Common myeloid progenitor, CD34-positive (primary cell): ENCODE measurements at regions of chr16 and their contacts with region 1.

Region 1: DNA sequence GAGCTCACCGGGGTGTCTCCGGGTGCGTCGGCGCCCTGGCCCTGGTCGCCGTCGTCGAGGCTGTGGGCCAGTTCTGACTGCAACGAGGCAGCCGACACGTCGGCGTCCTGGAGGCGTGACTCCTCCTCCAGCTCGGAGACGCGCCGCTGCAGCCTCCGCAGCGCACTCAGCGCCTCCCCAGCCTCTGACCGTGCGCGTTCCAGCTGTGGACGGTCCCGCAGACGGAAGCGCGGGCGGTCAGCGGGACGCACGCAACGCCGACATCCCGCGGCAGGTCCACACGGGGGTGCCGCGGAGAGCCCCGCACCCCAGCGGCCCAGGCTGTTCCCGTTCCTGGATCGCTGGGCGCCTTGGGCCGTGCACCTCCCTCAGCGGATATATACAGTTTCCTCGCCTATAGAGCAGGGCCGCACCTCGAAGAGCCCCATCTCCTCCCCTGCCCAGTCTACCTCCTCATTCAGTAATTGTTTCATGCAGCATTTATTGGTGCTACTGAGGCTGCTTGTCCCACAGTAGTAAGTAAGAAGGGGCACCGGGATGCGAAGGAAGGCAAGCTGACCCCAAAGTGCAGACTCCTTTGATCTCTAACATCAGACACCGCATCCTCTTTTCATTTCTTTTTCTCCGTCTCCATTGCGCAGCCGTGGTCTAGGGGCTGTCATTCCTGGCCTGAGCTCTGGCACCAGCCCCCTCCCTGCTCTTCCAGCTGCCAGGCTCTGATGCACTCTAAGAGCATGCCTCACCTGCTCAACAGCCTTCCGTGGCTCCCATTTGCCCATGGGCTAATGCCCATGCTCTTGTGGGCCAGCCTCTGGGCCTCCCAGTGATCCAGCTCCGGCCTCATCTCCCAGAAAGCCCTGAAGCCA is 5.9 kb downstream of the THOC6 start:
- DNase-seq: no peak
- H3K4me3 ChIP-seq: peak overlapping the region in 3 of 7 experiments; percentile 1 to 54 (median 6)
- H3K27ac ChIP-seq: no peak overlapping the region
- H3K4me1 ChIP-seq: peaks cover 0 to 22% (median 21%) of the 10 kb centered on the region in 4 experiments
- H3K27me3 ChIP-seq: peaks cover 0 to 64% (median 36%) of the 10 kb centered on the region in 5 experiments

Region 2: GRCh38 chr16:3009565-3010390 is 20.0 kb before region 1 on chr16:
- CTCF ChIA-PET with region 1: interaction called, 197 read pairs
- POLR2A ChIA-PET with region 1: interaction called, 3 read pairs
- DNase-seq: no peak
- H3K4me3 ChIP-seq: no peak overlapping the region
- H3K27ac ChIP-seq: no peak overlapping the region
- H3K4me1 ChIP-seq: peaks cover 11 to 54% (median 51%) of the 10 kb centered on the region in 4 experiments
- H3K27me3 ChIP-seq: peaks cover 0 to 4% (median 0%) of the 10 kb centered on the region in 5 experiments

Region 3: GRCh38 chr16:3045357-3045728 is 15.6 kb after region 1 on chr16:
- CTCF ChIA-PET with region 1: interaction called, 141 read pairs
- POLR2A ChIA-PET with region 1: interaction called, 4 read pairs
- DNase-seq: peak in 2 of 3 donors; percentile 53 to 65
- H3K4me3 ChIP-seq: peak overlapping the region in 6 of 7 experiments; percentile 17 to 63 (median 56)
- H3K27ac ChIP-seq: no peak overlapping the region
- H3K4me1 ChIP-seq: peaks cover 0 to 29% (median 21%) of the 10 kb centered on the region in 4 experiments
- H3K27me3 ChIP-seq: peaks cover 7 to 95% (median 32%) of the 10 kb centered on the region in 5 experiments